H1 (cell line): ENCODE measurements at regions of chr16 and their contacts with region 1.

Region 1: GRCh38 chr16:85821441-85822135 is 22.1 kb downstream of the COX4I1 start:
- DNase-seq: peak; percentile 63 to 99
- H3K4me3 ChIP-seq: no peak overlapping the region
- H3K27ac ChIP-seq: no peak overlapping the region
- H3K4me1 ChIP-seq: no peaks in the 10 kb centered on the region; a peak in 1 of 7 replicates
- H3K27me3 ChIP-seq: peaks cover 0 to 11% (median 3%) of the 10 kb centered on the region in 4 experiments; a peak in 2 of 7 replicates
- CTCF ChIP-seq: peak; percentile 86 to 99 (median 92)
- EP300 ChIP-seq: peak in 1 of 2 experiments; percentile 53; a peak in 1 of 3 replicates
- POLR2A ChIP-seq: no peak
- RAD21 ChIP-seq: peak; percentile 99 to 100

Region 2: DNA sequence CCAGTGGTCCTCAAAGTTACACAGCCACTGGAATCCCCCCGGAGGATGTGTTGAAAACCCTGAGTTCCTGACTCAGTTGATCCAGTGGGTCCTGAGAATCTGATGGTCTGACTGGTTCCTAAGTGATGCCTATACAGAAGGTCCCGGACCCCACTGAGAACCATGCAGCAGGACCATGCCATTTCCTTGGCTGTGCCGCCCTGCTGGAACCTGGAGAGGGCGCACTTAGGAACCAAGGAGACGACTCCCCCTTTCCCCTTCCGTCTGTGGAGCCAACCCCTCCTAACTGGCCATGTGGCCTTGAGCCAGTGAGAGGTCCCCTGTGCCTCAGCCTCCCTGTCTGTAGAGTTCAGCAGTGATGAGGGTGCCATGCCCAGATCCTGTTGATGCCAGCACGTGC is 92.7 kb before region 1 on chr16:
- CTCF ChIA-PET with region 1: no interaction called
- POLR2A ChIA-PET with region 1: no interaction called
- DNase-seq: peak in 1 of 2 experiments; percentile 79
- H3K4me3 ChIP-seq: no peak overlapping the region
- H3K27ac ChIP-seq: no peak overlapping the region
- H3K4me1 ChIP-seq: peaks cover 0 to 5% (median 4%) of the 10 kb centered on the region in 4 experiments; a peak in 3 of 7 replicates
- H3K27me3 ChIP-seq: no peaks in the 10 kb centered on the region; a peak in 1 of 7 replicates
- CTCF ChIP-seq: peak; percentile 62 to 91 (median 89)
- EP300 ChIP-seq: no peak
- POLR2A ChIP-seq: no peak
- RAD21 ChIP-seq: peak; percentile 32 to 62

Region 3: DNA sequence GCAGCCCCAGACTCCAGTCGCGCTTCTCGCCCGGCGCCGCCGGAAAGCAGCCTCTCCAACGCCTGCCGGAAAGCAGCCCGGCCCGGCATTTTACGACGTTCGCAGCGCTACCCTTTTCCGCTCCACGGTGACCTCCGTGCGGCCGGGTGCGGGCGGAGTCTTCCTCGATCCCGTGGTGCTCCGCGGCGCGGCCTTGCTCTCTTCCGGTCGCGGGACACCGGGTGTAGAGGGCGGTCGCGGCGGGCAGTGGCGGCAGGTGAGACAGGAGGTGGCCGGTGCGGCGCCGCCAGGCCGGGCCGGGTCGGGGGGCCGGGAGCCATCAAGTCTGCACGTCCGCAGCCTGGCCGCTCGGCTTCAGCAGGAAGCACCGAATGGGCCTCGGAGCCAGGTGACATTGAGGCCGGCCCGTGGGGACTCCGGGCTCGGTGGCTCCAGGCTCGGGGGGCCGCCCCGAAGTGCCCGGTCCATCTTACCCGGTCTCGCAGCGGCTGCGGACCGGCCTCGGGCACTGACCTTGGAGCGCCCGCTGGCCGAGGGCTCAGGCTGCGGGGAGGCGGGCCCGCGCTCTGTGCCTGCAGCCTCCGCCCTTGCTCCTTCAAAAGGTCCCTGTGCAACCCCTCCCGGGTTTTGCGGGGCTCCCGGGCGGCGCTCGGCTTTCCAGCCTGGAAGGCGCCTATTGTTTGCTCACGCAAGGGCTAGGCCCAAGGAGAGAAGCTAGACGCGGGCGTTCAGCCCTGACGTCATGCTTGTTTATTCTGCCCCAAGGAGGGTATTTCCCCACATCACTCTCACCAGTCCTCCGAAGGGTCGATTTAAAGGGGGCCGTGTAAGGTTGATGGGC is 21.9 kb before region 1 on chr16 and contains the starts of genes COX4I1 and EMC8:
- CTCF ChIA-PET with region 1: interaction called, 38 read pairs
- POLR2A ChIA-PET with region 1: no interaction called
- DNase-seq: peak; percentile 75 to 94
- H3K4me3 ChIP-seq: peak within 1 kb of the TSS; percentile 82 to 97 (median 95)
- H3K27ac ChIP-seq: peak within 1 kb of the TSS; percentile 81; the same call in 1 of the 2 replicates
- H3K4me1 ChIP-seq: peaks cover 0 to 3% (median 0%) of the 10 kb centered on the region in 4 experiments; a peak in 1 of 7 replicates
- H3K27me3 ChIP-seq: no peaks in the 10 kb centered on the region
- CTCF ChIP-seq: no peak
- EP300 ChIP-seq: no peak
- POLR2A ChIP-seq: peak; percentile 88 to 90
- RAD21 ChIP-seq: no peak
- total RNA-seq, gene COX4I1: 496 and 507 TPM in 2 replicates
- total RNA-seq, gene EMC8: 47.9 and 52.2 TPM in 2 replicates

Region 4: DNA sequence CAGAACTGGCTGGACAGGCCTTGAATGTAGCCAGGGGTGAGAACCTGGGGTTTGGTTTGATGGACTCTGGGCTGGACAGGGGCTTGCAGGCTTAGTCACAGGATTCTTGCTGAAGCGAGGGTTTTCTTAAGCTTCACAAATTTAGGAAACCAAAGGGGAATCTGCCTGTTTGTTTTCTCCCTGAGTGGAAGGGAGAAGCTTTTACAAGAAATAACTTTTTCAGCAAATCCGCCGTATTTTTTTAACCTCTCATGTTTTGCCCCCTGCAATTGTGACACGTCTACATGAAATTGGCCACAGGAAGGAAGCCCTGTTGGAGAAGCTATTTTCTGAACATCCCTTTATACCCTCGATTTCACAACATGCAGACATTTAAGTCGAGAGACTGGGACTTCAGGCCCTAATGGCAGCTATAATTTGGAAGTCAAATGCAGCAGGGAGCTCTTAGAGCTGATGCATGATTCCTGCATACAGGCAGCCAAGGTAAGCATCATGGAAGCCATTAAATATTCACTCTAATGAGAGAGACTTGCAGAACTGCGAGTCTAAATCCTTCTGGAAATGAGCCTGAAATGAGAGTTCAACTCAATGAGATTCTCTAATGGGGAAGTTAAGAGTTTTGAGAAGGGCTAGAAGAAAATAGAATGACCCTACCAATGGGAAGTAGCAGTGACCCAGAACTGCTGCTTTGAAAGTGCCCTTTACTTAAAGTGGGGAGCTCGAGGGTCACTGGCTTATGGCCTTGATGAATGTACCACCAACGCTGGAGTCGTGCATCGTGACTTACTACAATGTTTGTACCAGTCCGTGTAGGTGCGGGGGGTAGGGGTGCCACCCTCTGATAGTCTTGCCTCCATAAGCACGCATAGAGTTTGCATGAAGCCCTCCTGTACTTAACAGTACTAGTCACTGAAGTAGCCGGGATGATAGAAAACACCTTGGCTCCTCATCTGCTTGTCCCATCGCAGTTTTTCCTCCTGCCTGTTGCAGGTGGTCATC is 32.3 kb after region 1 on chr16:
- CTCF ChIA-PET with region 1: interaction called, 26 read pairs
- POLR2A ChIA-PET with region 1: no interaction called
- DNase-seq: no peak
- H3K4me3 ChIP-seq: no peak overlapping the region
- H3K27ac ChIP-seq: no peak overlapping the region
- H3K4me1 ChIP-seq: no peaks in the 10 kb centered on the region
- H3K27me3 ChIP-seq: no peaks in the 10 kb centered on the region; a peak in 1 of 7 replicates
- CTCF ChIP-seq: no peak
- EP300 ChIP-seq: no peak
- POLR2A ChIP-seq: no peak
- RAD21 ChIP-seq: no peak

Region 5: DNA sequence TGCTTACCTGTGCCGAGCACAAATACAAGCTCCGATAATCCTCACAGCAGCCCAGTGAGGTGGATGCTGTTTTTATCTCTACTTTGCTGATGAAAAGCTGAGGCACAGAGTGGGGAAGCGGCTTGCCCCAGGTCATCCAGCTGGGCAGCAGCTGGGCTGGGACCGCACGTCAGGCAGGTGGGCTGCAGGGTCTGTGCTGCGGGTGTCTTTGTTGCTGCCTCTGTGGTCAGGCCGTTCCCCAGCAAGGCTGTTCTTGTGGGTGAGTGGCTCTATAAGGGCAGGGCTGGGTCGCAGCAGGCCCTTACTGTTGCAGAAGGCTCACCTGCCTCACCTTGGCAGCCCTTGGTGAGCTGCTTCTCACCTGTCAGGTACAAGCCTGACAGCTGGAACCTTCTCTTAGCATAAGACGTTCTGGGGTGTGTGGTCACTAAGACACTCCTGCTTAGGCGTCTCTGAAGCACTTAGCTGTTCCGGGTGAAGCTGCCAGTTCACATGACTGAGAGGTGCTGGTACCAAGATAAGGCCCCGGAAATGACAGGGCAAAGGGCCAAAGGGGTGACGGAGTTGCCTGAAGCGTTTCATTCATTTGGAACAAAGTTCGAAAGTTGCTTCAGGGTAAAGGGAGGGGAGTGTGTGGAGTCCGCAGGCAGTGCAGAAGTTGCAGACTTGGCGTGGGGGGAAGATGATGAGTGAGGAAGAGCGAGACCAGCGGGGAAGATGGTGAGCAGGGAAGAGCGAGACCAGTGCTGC is 94.7 kb after region 1 on chr16:
- CTCF ChIA-PET with region 1: interaction called, 12 read pairs
- POLR2A ChIA-PET with region 1: no interaction called
- DNase-seq: no peak
- H3K4me3 ChIP-seq: no peak overlapping the region
- H3K27ac ChIP-seq: no peak overlapping the region
- H3K4me1 ChIP-seq: peaks cover 0 to 5% (median 2%) of the 10 kb centered on the region in 4 experiments; a peak in 3 of 7 replicates
- H3K27me3 ChIP-seq: peaks cover 0 to 2% (median 0%) of the 10 kb centered on the region in 4 experiments; a peak in 2 of 7 replicates
- CTCF ChIP-seq: no peak
- EP300 ChIP-seq: no peak
- POLR2A ChIP-seq: no peak
- RAD21 ChIP-seq: no peak

Region 6: DNA sequence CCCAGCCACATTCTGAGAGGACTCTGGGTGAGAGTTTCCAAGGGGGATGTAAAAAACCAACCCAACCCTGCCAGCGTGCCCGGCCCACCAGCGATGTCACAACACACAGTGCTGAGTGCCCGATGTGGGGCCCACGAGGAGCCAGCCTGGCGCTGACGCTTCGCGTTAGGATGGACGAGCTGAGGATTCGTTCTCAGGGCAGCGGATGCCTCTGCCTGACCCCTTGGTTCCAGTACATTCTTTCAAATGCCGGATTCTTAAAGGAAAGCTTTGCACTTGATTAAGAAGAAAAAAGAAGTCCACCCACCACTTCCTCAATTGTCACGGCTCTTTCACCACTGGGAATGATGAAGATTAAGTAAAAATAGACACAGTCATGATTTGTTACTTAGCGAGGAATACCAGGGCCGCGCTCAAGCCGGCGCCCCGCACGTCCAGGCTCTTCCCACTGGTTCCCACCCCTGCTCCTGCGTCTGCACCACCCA is 156.7 kb after region 1 on chr16:
- CTCF ChIA-PET with region 1: interaction called, 319 read pairs
- POLR2A ChIA-PET with region 1: interaction called, 3 read pairs
- DNase-seq: no peak
- H3K4me3 ChIP-seq: no peak overlapping the region
- H3K27ac ChIP-seq: no peak overlapping the region
- H3K4me1 ChIP-seq: peaks cover 0 to 5% (median 1%) of the 10 kb centered on the region in 4 experiments; a peak in 1 of 7 replicates
- H3K27me3 ChIP-seq: no peaks in the 10 kb centered on the region
- CTCF ChIP-seq: no peak
- EP300 ChIP-seq: no peak
- POLR2A ChIP-seq: no peak
- RAD21 ChIP-seq: no peak

Region 7: GRCh38 chr16:86016201-86016871 is 194.7 kb after region 1 on chr16:
- CTCF ChIA-PET with region 1: interaction called, 46 read pairs
- POLR2A ChIA-PET with region 1: no interaction called
- DNase-seq: peak; percentile 17 to 55
- H3K4me3 ChIP-seq: no peak overlapping the region
- H3K27ac ChIP-seq: no peak overlapping the region
- H3K4me1 ChIP-seq: no peaks in the 10 kb centered on the region
- H3K27me3 ChIP-seq: no peaks in the 10 kb centered on the region; a peak in 3 of 7 replicates
- CTCF ChIP-seq: peak; percentile 37 to 86 (median 80)
- EP300 ChIP-seq: no peak
- POLR2A ChIP-seq: no peak
- RAD21 ChIP-seq: peak; percentile 94 to 96